Caco-2 (cell line): ENCODE measurements at regions of chr20 and their contacts with region 1.

Region 1: DNA sequence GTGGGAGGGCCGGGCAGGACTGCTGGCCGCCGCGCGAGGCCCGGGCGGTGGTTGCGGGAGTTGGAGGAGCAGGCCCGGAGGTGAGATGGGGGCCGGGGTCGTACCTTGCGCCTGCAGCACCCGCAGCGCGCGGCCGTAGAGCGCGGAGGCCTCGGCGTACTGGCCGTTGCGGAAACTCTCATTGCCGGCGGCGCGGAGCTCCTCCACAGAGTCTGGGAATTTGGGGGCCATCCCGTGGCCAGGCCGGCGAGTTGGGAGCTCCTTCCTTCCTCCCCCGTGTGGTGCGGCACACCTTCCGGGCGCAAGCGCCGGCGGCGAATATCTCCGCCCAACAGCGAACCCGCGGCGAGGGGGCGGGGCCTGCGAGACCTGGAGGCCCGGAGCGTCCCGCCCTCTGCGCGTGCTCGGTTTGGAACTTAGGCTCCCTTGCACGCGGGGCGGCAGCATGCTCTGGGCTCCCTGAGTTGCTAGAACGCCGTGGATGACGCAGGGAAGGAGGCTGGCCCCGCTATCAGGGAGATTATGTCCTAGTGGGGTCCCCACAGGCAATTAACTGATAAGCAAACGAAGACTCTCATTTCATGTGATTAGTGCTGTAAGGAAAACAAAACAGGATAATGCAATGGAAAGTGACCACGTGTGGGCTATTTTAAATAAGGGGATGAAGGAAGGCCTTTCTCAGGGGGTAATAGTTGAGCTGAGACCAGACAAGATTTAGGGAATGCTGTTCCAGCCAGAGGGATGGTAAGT is at the start of gene TOMM34:
- DNase-seq: peak; percentile 98 to 100
- H3K4me3 ChIP-seq: peak within 1 kb of the TSS; percentile 86
- H3K4me3 Mint-ChIP-seq: peak within 1 kb of the TSS; percentile 86
- H3K27ac Mint-ChIP-seq: peak within 1 kb of the TSS; percentile 75
- H3K4me1 ChIP-seq: peaks cover 60% of the 10 kb centered on the region
- H3K4me1 Mint-ChIP-seq: peaks cover 56% of the 10 kb centered on the region
- H3K27me3 ChIP-seq: no peaks in the 10 kb centered on the region
- H3K27me3 Mint-ChIP-seq: no peaks in the 10 kb centered on the region
- CTCF ChIP-seq: peak in 1 of 2 experiments; percentile 33
- total RNA-seq, gene TOMM34: 131 and 139 TPM in 2 replicates

Region 2: GRCh38 chr20:44210422-44211176 is 749.7 kb before region 1 on chr20 and contains the start of gene OSER1:
- CTCF ChIA-PET with region 1: no interaction called
- POLR2A ChIA-PET with region 1: no interaction called
- intact Hi-C with region 1: loop called (anchors 5 kb)
- DNase-seq: peak; percentile 100
- H3K4me3 ChIP-seq: peak within 1 kb of the TSS; percentile 74
- H3K4me3 Mint-ChIP-seq: peak within 1 kb of the TSS; percentile 95
- H3K27ac Mint-ChIP-seq: peak within 1 kb of the TSS; percentile 96
- H3K4me1 ChIP-seq: peaks cover 19% of the 10 kb centered on the region
- H3K4me1 Mint-ChIP-seq: peaks cover 27% of the 10 kb centered on the region
- H3K27me3 ChIP-seq: no peaks in the 10 kb centered on the region
- H3K27me3 Mint-ChIP-seq: no peaks in the 10 kb centered on the region
- CTCF ChIP-seq: no peak
- total RNA-seq, gene OSER1: 79.7 and 82.3 TPM in 2 replicates

Region 3: GRCh38 chr20:44475694-44476560 is 484.4 kb before region 1 on chr20 and contains the start of gene TTPAL:
- CTCF ChIA-PET with region 1: no interaction called
- POLR2A ChIA-PET with region 1: no interaction called
- intact Hi-C with region 1: no loop called
- DNase-seq: peak; percentile 95 to 99
- H3K4me3 ChIP-seq: peak within 1 kb of the TSS; percentile 89
- H3K4me3 Mint-ChIP-seq: peak within 1 kb of the TSS; percentile 98
- H3K27ac Mint-ChIP-seq: peak within 1 kb of the TSS; percentile 96
- H3K4me1 ChIP-seq: peaks cover 19% of the 10 kb centered on the region
- H3K4me1 Mint-ChIP-seq: peaks cover 25% of the 10 kb centered on the region
- H3K27me3 ChIP-seq: no peaks in the 10 kb centered on the region
- H3K27me3 Mint-ChIP-seq: no peaks in the 10 kb centered on the region
- CTCF ChIP-seq: peak; percentile 28 to 78
- total RNA-seq, gene TTPAL: 53.9 and 54.6 TPM in 2 replicates

Region 4: GRCh38 chr20:44942264-44942973 is 17.9 kb before region 1 on chr20:
- CTCF ChIA-PET with region 1: interaction called, 10 read pairs
- POLR2A ChIA-PET with region 1: interaction called, 5 read pairs
- intact Hi-C with region 1: loop called (anchors 1 kb)
- DNase-seq: peak; percentile 68
- H3K4me3 ChIP-seq: no peak overlapping the region
- H3K4me3 Mint-ChIP-seq: no peak overlapping the region
- H3K27ac Mint-ChIP-seq: no peak overlapping the region
- H3K4me1 ChIP-seq: no peaks in the 10 kb centered on the region
- H3K4me1 Mint-ChIP-seq: peaks cover 6% of the 10 kb centered on the region
- H3K27me3 ChIP-seq: no peaks in the 10 kb centered on the region
- H3K27me3 Mint-ChIP-seq: no peaks in the 10 kb centered on the region
- CTCF ChIP-seq: peak; percentile 49 to 62